ENCODE measurements at regions of chr1 and their contacts with region 1.

Region 1: DNA sequence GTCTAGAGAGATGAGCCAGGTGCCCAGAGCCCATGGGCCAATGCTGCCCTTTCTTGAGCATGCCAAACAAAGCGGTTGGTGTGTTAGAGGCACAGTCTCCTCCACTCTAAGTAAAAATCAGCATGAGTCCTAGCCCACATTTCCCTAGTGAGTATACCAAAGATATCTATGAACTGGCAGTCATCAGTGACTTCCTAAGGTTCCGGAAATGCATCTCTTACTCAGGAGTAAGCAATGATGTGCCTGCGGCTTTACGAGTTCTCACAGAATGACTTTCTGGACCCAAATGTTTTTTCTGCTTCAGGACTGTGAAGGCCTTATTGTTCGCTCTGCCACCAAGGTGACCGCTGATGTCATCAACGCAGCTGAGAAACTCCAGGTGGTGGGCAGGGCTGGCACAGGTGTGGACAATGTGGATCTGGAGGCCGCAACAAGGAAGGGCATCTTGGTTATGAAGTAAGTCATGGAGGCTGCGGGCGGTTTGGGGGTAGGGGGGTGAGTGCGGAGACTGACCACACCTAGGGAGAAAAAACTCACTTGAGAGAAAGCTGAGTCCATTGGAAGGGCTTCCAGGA is 9.2 kb downstream of the PHGDH start:
- DNase-seq: no peak
- ATAC-seq: no peak
- H3K4me3 ChIP-seq: no peak overlapping the region
- H3K27ac ChIP-seq: no peak overlapping the region
- H3K4me1 ChIP-seq: peaks cover 0 to 3% of the 10 kb centered on the region in 2 experiments; a peak in 1 of 5 replicates
- H3K27me3 ChIP-seq: no peaks in the 10 kb centered on the region
- CTCF ChIP-seq: no peak
- EP300 ChIP-seq: no peak
- POLR2A ChIP-seq: no peak
- RAD21 ChIP-seq: no peak

Region 2: DNA sequence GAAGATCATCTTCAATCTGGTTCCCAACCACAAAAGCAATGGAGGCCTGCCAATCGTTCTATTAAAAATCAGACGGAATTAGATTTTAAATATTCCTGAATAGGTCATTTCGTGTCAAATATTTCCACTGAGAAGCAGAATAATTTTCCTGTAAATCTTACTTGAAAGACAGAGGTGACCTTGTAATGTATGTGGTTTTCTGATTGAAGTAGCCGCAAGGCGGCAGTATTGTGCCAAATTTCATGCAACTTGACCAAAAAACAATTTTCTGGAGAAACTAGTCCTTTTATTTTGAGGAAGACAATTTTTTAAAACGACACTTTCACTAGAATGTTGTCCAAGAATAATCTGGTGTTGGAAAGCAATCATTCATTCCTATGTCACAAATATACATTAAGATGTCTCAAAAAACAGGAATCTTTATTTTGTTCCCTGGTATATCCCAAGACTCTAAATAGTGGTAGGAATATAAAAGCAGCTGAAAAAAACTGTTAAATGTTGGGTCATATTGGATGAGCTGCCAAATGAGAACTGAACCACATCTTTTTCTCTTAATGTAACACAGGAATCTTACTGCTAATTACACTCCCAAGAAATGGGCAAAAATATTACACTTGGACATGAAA is 1569.5 kb before region 1 on chr1:
- CTCF ChIA-PET with region 1: no interaction called
- POLR2A ChIA-PET with region 1: no interaction called
- in situ Hi-C with region 1: no loop called
- intact Hi-C with region 1: no loop called
- DNase-seq: peak; percentile 32 to 78 (median 34)
- ATAC-seq: peak; percentile 76
- H3K4me3 ChIP-seq: no peak overlapping the region
- H3K27ac ChIP-seq: no peak overlapping the region
- H3K4me1 ChIP-seq: no peaks in the 10 kb centered on the region
- H3K27me3 ChIP-seq: no peaks in the 10 kb centered on the region
- CTCF ChIP-seq: peak; percentile 68 to 87 (median 81); a peak in 5 of 6 replicates
- EP300 ChIP-seq: no peak
- POLR2A ChIP-seq: no peak
- RAD21 ChIP-seq: peak; percentile 89 to 96

Region 3: GRCh38 chr1:119737040-119737682 is 16.2 kb after region 1 on chr1:
- CTCF ChIA-PET with region 1: no interaction called
- POLR2A ChIA-PET with region 1: interaction called, 10 read pairs
- in situ Hi-C with region 1: no loop called
- intact Hi-C with region 1: no loop called
- DNase-seq: peak; percentile 84 to 93 (median 88)
- ATAC-seq: peak; percentile 91
- H3K4me3 ChIP-seq: no peak overlapping the region
- H3K27ac ChIP-seq: no peak overlapping the region
- H3K4me1 ChIP-seq: peaks cover 11 to 14% of the 10 kb centered on the region in 2 experiments
- H3K27me3 ChIP-seq: no peaks in the 10 kb centered on the region; a peak in 1 of 5 replicates
- CTCF ChIP-seq: peak in 1 of 3 experiments; percentile 8; a peak in 1 of 6 replicates
- EP300 ChIP-seq: peak; percentile 89
- POLR2A ChIP-seq: no peak
- RAD21 ChIP-seq: no peak

Region 4: DNA sequence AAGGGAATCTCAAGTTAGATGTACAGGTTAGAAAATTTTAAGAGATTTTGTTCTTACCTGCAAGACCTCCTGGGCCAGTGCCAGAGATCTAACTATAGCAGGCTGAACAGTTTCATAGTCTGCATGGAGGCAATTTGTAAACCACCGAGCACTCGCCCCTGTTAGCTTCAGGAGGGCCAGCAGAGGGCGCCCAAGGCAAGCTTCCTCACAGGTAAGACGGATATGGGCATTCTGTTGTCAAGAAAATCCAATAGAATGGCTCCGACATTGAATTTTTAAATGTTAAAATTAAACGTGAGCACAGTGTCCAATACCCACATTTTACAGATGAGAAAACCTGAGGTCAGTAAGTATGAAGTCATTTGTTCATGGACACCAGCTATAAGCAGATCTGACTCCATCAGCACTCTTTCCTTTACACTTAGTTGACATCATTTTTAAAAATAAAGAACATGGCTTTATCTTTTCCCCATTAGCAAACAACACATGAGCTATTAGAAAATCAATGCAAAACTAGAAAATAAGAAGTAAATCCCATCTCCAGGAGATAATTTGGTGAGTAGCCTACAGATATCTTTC is 88.1 kb after region 1 on chr1:
- CTCF ChIA-PET with region 1: no interaction called
- POLR2A ChIA-PET with region 1: no interaction called
- in situ Hi-C with region 1: no loop called
- intact Hi-C with region 1: no loop called
- DNase-seq: peak; percentile 68 to 81 (median 74)
- ATAC-seq: peak; percentile 98
- H3K4me3 ChIP-seq: no peak overlapping the region
- H3K27ac ChIP-seq: no peak overlapping the region
- H3K4me1 ChIP-seq: 0 out of 5 replicates have a peak, but pooled peaks cover 0 to 2% of the 10 kb centered on the region in 2 experiments
- H3K27me3 ChIP-seq: peaks cover 20 to 22% of the 10 kb centered on the region in 2 experiments
- CTCF ChIP-seq: peak; percentile 87 to 95 (median 89)
- EP300 ChIP-seq: no peak
- POLR2A ChIP-seq: no peak
- RAD21 ChIP-seq: peak; percentile 66 to 91

Measured in K562 (cell line).